GM12878 (cell line): ENCODE measurements at regions of chr6 and their contacts with region 1.

Region 1: GRCh38 chr6:132279592-132280139 is 121.6 kb downstream of the MOXD1 start:
- DNase-seq: peak; percentile 64
- ATAC-seq: peak; percentile 94
- H3K4me3 ChIP-seq: peak overlapping the region; percentile 74
- H3K27ac ChIP-seq: no peak overlapping the region
- H3K4me1 ChIP-seq: no peaks in the 10 kb centered on the region
- H3K27me3 ChIP-seq: peaks cover 0 to 3% of the 10 kb centered on the region in 2 experiments; a peak in 2 of 4 replicates
- CTCF ChIP-seq: peak; percentile 61 to 94 (median 63)
- EP300 ChIP-seq: no peak
- POLR2A ChIP-seq: no peak
- RAD21 ChIP-seq: peak; percentile 84

Region 2: DNA sequence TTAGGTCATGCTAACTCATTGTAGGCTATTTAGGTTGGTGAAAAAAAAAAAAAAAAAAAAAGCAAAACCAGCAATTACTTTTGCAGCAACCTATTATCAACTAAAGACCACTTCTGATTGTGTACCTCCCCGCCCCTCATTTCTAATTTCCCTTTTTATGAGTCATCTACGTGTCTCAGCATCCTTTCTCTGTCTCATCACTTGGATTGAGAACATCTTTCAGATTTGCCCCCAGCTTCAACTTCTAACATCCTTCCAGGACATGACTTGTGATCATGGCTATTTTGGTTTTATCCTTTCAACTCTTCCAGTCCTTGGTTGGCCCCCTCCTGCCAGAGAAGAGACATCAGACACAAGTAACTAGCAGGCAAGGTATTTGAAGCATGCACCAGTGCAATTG is 171.8 kb before region 1 on chr6:
- CTCF ChIA-PET with region 1: no interaction called
- POLR2A ChIA-PET with region 1: no interaction called
- RAD21 ChIA-PET with region 1: no interaction called
- SMC1A ChIA-PET with region 1: no interaction called
- in situ Hi-C with region 1: no loop called
- intact Hi-C with region 1: no loop called
- DNase-seq: no peak
- ATAC-seq: no peak
- H3K4me3 ChIP-seq: no peak overlapping the region
- H3K27ac ChIP-seq: no peak overlapping the region
- H3K4me1 ChIP-seq: no peaks in the 10 kb centered on the region
- H3K27me3 ChIP-seq: no peaks in the 10 kb centered on the region
- CTCF ChIP-seq: no peak
- EP300 ChIP-seq: no peak
- POLR2A ChIP-seq: no peak
- RAD21 ChIP-seq: no peak

Region 3: DNA sequence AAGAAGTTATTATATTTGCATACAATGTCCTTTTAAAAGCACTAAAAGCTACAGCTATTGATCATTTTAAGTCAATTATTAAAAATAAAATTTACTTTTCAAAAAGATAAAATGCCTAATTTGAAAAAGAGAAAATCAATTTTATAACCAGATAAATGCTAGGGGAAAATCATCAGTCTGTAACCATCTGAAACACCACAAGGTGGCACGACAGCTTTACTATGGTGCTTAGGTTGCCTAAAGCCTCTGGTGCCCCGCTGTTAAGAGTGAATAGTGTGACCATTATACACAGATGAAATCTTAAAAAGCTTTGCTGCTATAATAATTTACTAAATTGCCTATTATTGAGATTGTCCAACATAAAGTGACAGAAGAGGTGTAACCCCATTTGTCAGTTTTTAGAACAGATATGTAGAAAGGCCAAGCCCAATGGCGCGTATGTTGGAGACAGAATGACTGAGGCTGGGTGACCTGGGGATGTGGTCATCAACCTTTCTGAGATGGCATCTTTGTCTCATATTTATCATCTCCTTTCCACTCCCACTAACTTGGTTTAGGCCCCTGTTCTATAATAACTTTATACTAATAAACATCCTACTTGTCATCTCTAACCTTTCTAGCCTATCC is 20.8 kb after region 1 on chr6:
- CTCF ChIA-PET with region 1: interaction called, 462 read pairs
- POLR2A ChIA-PET with region 1: no interaction called
- RAD21 ChIA-PET with region 1: interaction called, 69 read pairs
- SMC1A ChIA-PET with region 1: interaction called, 113 read pairs
- in situ Hi-C with region 1: no loop called
- intact Hi-C with region 1: loop called (anchors 1 kb)
- DNase-seq: no peak
- ATAC-seq: peak; percentile 94
- H3K4me3 ChIP-seq: no peak overlapping the region
- H3K27ac ChIP-seq: no peak overlapping the region
- H3K4me1 ChIP-seq: no peaks in the 10 kb centered on the region
- H3K27me3 ChIP-seq: peaks cover 0 to 1% of the 10 kb centered on the region in 2 experiments; a peak in 1 of 4 replicates
- CTCF ChIP-seq: peak; percentile 51 to 69 (median 60); a peak in 5 of 6 replicates
- EP300 ChIP-seq: no peak
- POLR2A ChIP-seq: no peak
- RAD21 ChIP-seq: peak; percentile 94

Region 4: DNA sequence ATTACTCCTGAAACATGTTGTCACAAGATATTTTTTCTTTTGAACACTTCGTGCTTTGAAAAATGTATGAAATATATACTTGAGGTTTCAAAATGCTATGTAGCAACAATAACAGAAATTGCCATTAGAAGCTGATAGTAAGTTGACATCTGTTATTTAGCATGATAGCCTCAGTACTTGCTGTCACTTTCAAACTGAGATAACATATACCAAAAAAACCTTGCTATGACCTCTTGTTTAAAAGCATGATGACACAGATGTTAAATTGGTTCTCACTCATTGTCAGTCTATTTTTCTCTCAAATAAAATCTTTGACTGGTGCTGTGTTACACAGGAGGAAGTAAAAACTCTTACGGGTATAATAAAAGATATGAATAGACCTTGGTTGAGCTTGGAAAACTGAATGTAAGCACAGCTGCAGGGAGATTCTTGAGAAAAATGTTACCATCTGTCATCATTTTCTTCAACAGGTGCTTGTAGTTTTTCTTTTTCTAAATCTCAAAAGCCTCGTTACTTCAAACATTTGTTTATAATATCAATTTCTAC is 103.0 kb after region 1 on chr6:
- CTCF ChIA-PET with region 1: interaction called, 10 read pairs
- POLR2A ChIA-PET with region 1: no interaction called
- RAD21 ChIA-PET with region 1: no interaction called
- SMC1A ChIA-PET with region 1: interaction called, 4 read pairs
- in situ Hi-C with region 1: no loop called
- intact Hi-C with region 1: no loop called
- DNase-seq: no peak
- ATAC-seq: no peak
- H3K4me3 ChIP-seq: no peak overlapping the region
- H3K27ac ChIP-seq: no peak overlapping the region
- H3K4me1 ChIP-seq: no peaks in the 10 kb centered on the region
- H3K27me3 ChIP-seq: no peaks in the 10 kb centered on the region; a peak in 1 of 4 replicates
- CTCF ChIP-seq: no peak
- EP300 ChIP-seq: no peak
- POLR2A ChIP-seq: no peak
- RAD21 ChIP-seq: no peak

Region 5: DNA sequence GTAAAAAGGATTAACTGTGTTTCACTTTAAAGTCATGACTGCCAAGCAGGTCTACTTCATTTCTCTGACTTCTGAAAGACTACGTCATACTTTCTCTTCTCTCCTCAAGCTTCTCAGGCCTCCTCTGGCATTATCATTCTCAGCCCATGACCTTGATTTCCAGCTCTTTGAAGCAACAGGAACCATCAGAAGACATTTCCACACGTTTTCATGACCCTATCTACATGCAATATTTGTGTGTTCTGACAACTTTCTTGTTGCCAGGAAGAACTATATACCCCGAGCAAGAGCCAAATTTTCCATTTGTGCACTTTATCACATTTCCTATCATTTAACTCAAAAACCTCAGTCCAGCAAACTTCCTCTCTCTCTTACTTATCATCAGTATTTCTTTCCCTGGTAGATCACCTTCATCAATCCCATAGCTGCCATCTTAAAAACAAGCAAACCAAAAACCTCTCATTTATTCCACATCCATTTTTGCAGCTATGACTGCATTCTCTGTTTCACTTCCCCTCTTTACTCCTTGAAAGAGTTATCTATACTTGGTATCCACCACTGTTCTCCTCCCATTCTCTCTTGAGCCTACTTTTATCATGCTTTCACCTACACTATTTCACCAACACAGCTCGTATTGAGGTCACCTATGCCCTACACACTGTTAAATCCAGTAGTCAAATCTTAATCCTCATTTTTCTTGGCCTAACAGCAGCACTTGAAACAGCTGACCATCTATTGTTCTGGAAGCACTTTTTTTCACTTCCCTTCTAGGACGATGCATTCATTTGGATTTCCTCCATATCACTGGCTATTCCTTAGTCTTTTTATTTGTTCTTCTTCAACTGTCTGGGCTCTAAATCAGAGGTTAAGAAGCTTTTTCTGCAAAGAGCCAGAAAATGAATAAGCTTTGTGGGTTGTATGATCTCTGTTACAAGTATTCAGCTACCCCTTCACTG is 186.1 kb after region 1 on chr6:
- CTCF ChIA-PET with region 1: interaction called, 13 read pairs
- POLR2A ChIA-PET with region 1: no interaction called
- RAD21 ChIA-PET with region 1: interaction called, 3 read pairs
- SMC1A ChIA-PET with region 1: interaction called, 12 read pairs
- in situ Hi-C with region 1: no loop called
- intact Hi-C with region 1: no loop called
- DNase-seq: no peak
- ATAC-seq: peak; percentile 94
- H3K4me3 ChIP-seq: no peak overlapping the region
- H3K27ac ChIP-seq: peak overlapping the region; percentile 40; the same call in 1 of the 2 replicates
- H3K4me1 ChIP-seq: peaks cover 16% of the 10 kb centered on the region
- H3K27me3 ChIP-seq: no peaks in the 10 kb centered on the region
- CTCF ChIP-seq: no peak
- EP300 ChIP-seq: peak in 1 of 2 experiments; percentile 40; a peak in 1 of 4 replicates
- POLR2A ChIP-seq: no peak
- RAD21 ChIP-seq: no peak

Region 6: GRCh38 chr6:132490024-132490423 is 210.4 kb after region 1 on chr6:
- CTCF ChIA-PET with region 1: interaction called, 263 read pairs
- POLR2A ChIA-PET with region 1: no interaction called
- RAD21 ChIA-PET with region 1: interaction called, 77 read pairs
- SMC1A ChIA-PET with region 1: interaction called, 83 read pairs
- in situ Hi-C with region 1: no loop called
- intact Hi-C with region 1: no loop called
- DNase-seq: no peak
- ATAC-seq: peak; percentile 54
- H3K4me3 ChIP-seq: peak overlapping the region; percentile 56
- H3K27ac ChIP-seq: peak overlapping the region; percentile 73
- H3K4me1 ChIP-seq: peaks cover 38% of the 10 kb centered on the region
- H3K27me3 ChIP-seq: no peaks in the 10 kb centered on the region
- CTCF ChIP-seq: no peak
- EP300 ChIP-seq: no peak
- POLR2A ChIP-seq: no peak
- RAD21 ChIP-seq: no peak

Region 7: GRCh38 chr6:132530293-132530974 is 250.8 kb after region 1 on chr6:
- CTCF ChIA-PET with region 1: interaction called, 16 read pairs
- POLR2A ChIA-PET with region 1: no interaction called
- RAD21 ChIA-PET with region 1: interaction called, 5 read pairs
- SMC1A ChIA-PET with region 1: no interaction called
- in situ Hi-C with region 1: no loop called
- intact Hi-C with region 1: no loop called
- DNase-seq: peak; percentile 21
- ATAC-seq: peak; percentile 96
- H3K4me3 ChIP-seq: no peak overlapping the region
- H3K27ac ChIP-seq: no peak overlapping the region
- H3K4me1 ChIP-seq: no peaks in the 10 kb centered on the region
- H3K27me3 ChIP-seq: no peaks in the 10 kb centered on the region; a peak in 1 of 4 replicates
- CTCF ChIP-seq: peak; percentile 57 to 74 (median 60); a peak in 5 of 6 replicates
- EP300 ChIP-seq: no peak
- POLR2A ChIP-seq: no peak
- RAD21 ChIP-seq: peak; percentile 91

Region 8: DNA sequence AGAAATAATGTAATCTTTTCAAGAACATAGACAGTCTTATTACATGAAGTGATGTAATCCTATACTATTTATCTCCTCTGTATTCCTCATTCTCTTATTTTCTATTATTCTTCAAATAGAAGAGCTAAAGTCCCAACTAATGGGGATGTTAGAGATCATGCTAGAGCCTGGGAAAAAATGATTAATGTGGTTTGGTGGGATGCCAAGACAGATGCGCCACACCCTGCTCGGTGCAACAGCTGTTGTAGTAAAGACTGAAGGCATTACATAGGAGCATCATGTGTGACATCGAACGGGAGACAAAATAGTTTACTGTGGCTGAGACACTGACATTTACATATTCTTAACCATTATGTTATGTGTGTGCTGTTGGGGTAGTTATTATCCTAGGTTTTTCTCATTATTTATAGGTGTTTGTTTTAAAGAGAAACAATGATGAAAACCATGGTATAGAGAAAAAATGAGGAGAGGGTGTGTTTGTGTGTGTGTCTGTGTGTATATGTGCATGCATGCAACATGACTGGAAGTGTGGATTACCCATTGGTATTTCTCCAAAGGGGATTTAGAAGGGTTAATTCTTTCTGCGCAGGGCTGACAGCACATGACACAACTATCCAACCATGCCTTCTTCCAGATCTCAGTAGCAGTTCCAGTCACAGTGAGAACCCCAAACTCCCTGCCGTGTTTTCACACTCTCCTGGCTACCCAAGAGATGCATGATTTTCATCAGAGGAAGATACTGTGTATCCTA is 1116.7 kb after region 1 on chr6:
- CTCF ChIA-PET with region 1: no interaction called
- POLR2A ChIA-PET with region 1: no interaction called
- RAD21 ChIA-PET with region 1: no interaction called
- SMC1A ChIA-PET with region 1: no interaction called
- in situ Hi-C with region 1: no loop called
- intact Hi-C with region 1: no loop called
- DNase-seq: no peak
- ATAC-seq: no peak
- H3K4me3 ChIP-seq: no peak overlapping the region
- H3K27ac ChIP-seq: no peak overlapping the region
- H3K4me1 ChIP-seq: no peaks in the 10 kb centered on the region
- H3K27me3 ChIP-seq: no peaks in the 10 kb centered on the region
- CTCF ChIP-seq: no peak
- EP300 ChIP-seq: no peak
- POLR2A ChIP-seq: no peak
- RAD21 ChIP-seq: no peak